PC-9 (cell line): ENCODE measurements at regions of chr3 and their contacts with region 1.

Region 1: GRCh38 chr3:63937661-63938651 is 25.8 kb upstream of the SCAANT1 start:
- DNase-seq: peak; percentile 43 to 86
- H3K4me3 ChIP-seq: peak overlapping the region; percentile 29; the same call in 1 of the 2 replicates
- H3K27ac ChIP-seq: peak overlapping the region; percentile 60
- H3K4me1 ChIP-seq: peaks cover 41% of the 10 kb centered on the region
- H3K27me3 ChIP-seq: no peaks in the 10 kb centered on the region
- CTCF ChIP-seq: no peak

Region 2: GRCh38 chr3:63847718-63848450 is 90.1 kb before region 1 on chr3:
- CTCF ChIA-PET with region 1: no interaction called
- POLR2A ChIA-PET with region 1: no interaction called
- intact Hi-C with region 1: no loop called
- DNase-seq: peak; percentile 41 to 60
- H3K4me3 ChIP-seq: peak overlapping the region; percentile 5; the same call in 1 of the 2 replicates
- H3K27ac ChIP-seq: 0 out of 2 replicates have a peak overlapping the region, but pooled peaks have one; percentile 16
- H3K4me1 ChIP-seq: peaks cover 17% of the 10 kb centered on the region
- H3K27me3 ChIP-seq: no peaks in the 10 kb centered on the region
- CTCF ChIP-seq: no peak

Region 3: GRCh38 chr3:63918339-63918737 is 19.6 kb before region 1 on chr3:
- CTCF ChIA-PET with region 1: no interaction called
- POLR2A ChIA-PET with region 1: interaction called, 3 read pairs
- intact Hi-C with region 1: loop called (anchors 2 kb)
- DNase-seq: peak in 1 of 2 experiments; percentile 66
- H3K4me3 ChIP-seq: no peak overlapping the region
- H3K27ac ChIP-seq: peak overlapping the region; percentile 67
- H3K4me1 ChIP-seq: peaks cover 47% of the 10 kb centered on the region
- H3K27me3 ChIP-seq: no peaks in the 10 kb centered on the region
- CTCF ChIP-seq: no peak